Psoas muscle (tissue), 8 donors: ENCODE measurements at regions of chr16 and their contacts with region 1.

Region 1: GRCh38 chr16:19886073-19886941 is 1.7 kb upstream of the GPRC5B start:
- DNase-seq: peak; percentile 74 to 85
- ATAC-seq: peak; percentile 60 to 66 (median 63)
- H3K4me3 ChIP-seq: peak overlapping the region; percentile 92
- H3K27ac ChIP-seq: no peak overlapping the region
- H3K4me1 ChIP-seq: peaks cover 17% of the 10 kb centered on the region
- H3K27me3 ChIP-seq: no peaks in the 10 kb centered on the region
- CTCF ChIP-seq: peak; percentile 100

Region 2: GRCh38 chr16:19555162-19555937 is 331.0 kb before region 1 on chr16 and contains the start of gene VPS35L:
- intact Hi-C with region 1: loop called in 1 of 2 experiments (anchors 2 kb)
- DNase-seq: peak; percentile 99 to 100
- ATAC-seq: peak; percentile 97 to 99 (median 98)
- H3K4me3 ChIP-seq: peak within 1 kb of the TSS; percentile 90
- H3K27ac ChIP-seq: peak within 1 kb of the TSS; percentile 93
- H3K4me1 ChIP-seq: peaks cover 5% of the 10 kb centered on the region
- H3K27me3 ChIP-seq: no peaks in the 10 kb centered on the region
- CTCF ChIP-seq: peak; percentile 80
- total RNA-seq, gene VPS35L: 27.8 to 34.6 (median 32.4) TPM

Region 3: GRCh38 chr16:19601083-19601976 is 285.0 kb before region 1 on chr16:
- intact Hi-C with region 1: loop called (anchors 1 to 2 kb)
- DNase-seq: no peak
- ATAC-seq: peak in 1 of 4 donors; percentile 69
- H3K4me3 ChIP-seq: no peak overlapping the region
- H3K27ac ChIP-seq: no peak overlapping the region
- H3K4me1 ChIP-seq: peaks cover 17% of the 10 kb centered on the region
- H3K27me3 ChIP-seq: no peaks in the 10 kb centered on the region
- CTCF ChIP-seq: peak; percentile 65

Region 4: GRCh38 chr16:19804538-19805323 is 81.6 kb before region 1 on chr16:
- intact Hi-C with region 1: loop called in 1 of 2 experiments (anchors 1 kb)
- DNase-seq: peak; percentile 50 to 66
- ATAC-seq: peak in 1 of 4 donors; percentile 25
- H3K4me3 ChIP-seq: no peak overlapping the region
- H3K27ac ChIP-seq: peak overlapping the region; percentile 53
- H3K4me1 ChIP-seq: peaks cover 28% of the 10 kb centered on the region
- H3K27me3 ChIP-seq: no peaks in the 10 kb centered on the region
- CTCF ChIP-seq: no peak

Region 5: DNA sequence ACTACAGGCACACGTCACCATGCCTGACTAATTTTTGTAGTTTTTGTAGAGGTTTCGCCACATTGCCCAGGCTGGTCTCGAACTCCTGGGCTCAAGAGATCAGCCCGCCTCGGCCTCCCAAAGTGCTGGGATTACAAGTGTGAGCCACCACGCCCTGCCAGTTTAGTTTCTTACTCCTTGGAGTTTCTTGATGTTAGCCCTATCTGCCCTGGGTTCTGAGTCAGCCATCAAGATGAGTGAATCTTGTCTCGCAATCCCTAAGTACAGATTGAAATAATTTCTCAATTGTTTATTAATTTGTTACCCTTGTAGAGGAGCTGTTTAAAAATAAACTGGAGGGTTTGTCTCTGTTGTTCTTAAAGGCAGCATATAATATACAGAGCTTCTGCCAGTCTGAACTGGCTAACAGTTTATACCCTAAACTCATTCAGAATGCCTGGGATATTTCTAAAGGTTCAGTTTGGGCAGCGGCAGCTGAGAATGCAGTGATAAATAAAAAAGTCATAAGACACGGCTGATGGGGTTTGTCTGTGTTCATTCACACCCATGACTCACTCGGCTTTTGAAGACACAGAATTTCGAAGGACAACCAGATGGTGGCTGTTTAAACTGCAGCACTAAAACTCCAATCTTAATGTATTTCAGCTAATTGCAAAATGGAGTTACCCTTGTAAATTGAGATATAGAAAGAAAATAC is 41.2 kb before region 1 on chr16:
- intact Hi-C with region 1: loop called in 1 of 2 experiments (anchors 5 kb)
- DNase-seq: no peak
- ATAC-seq: peak; percentile 66 to 79 (median 70)
- H3K4me3 ChIP-seq: no peak overlapping the region
- H3K27ac ChIP-seq: peak overlapping the region; percentile 89
- H3K4me1 ChIP-seq: peaks cover 28% of the 10 kb centered on the region
- H3K27me3 ChIP-seq: no peaks in the 10 kb centered on the region
- CTCF ChIP-seq: peak; percentile 8

Region 6: DNA sequence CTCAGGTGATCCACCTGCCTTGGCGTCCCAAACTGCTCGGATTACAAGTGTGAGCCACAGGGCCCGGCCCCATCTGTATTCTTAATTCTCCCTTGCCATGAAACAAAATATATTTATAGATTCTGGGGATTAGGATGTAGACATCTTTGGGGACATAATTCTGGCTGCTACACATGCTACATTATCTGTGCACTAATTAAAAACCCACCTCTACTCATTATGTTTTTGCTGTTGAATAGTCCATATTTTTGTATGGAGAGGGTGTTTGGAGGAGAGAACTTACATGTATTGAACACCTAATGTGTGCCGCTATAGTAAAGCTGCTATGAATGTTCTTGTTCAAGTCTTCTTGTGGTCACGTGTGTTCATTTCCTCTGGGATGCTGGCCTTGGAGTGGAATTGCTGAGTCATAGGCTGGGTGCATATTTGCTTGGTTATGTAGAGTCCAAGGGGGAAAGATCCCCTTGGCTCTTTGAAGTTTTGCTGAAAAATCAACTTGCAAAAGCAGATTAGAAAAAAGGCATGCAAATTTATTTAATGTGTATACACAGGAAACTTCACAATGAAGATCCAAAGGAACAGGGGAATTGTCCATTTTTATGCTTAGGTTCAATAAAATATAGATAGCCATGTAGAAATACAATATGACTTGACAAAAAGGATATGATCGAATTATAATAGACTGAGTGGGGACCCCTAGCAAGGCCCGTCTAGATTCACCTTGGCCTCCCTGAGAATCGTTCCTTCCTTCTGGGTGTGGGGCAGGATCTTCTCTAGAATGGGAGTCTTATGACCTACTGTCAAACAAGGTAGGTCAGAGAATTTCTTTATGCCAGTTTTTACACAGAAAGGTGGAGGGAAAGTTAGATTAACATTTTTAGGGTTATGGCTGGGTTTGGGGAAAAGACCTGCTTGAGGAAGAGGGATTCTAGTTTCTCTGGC is 40.4 kb after region 1 on chr16:
- intact Hi-C with region 1: no loop called
- DNase-seq: no peak
- ATAC-seq: no peak
- H3K4me3 ChIP-seq: no peak overlapping the region
- H3K27ac ChIP-seq: no peak overlapping the region
- H3K4me1 ChIP-seq: no peaks in the 10 kb centered on the region
- H3K27me3 ChIP-seq: no peaks in the 10 kb centered on the region
- CTCF ChIP-seq: no peak

Region 7: DNA sequence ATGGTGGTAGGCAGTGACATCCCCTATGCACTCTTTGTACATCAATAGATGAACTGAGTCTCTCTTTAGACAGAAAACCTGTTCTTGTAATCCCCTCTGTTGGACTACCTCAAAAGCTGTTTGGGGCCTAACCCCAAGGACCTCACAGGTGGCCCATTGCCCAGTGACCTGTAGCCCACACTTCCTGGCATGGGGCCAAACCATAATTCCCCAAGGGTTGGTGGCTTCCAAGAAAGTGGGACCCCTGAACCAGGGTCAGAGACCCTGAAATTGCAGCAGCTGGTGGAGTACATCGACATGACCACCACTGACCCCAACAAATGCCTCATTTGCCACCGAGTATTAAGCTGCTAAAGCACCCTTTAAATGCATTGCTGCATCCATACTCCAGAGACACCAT is 270.5 kb after region 1 on chr16:
- intact Hi-C with region 1: no loop called
- DNase-seq: no peak
- ATAC-seq: no peak
- H3K4me3 ChIP-seq: no peak overlapping the region
- H3K27ac ChIP-seq: no peak overlapping the region
- H3K4me1 ChIP-seq: no peaks in the 10 kb centered on the region
- H3K27me3 ChIP-seq: no peaks in the 10 kb centered on the region
- CTCF ChIP-seq: no peak